MCF 10A (cell line): ENCODE measurements at regions of chr2 and their contacts with region 1.

Region 1: GRCh38 chr2:69755862-69756467 is 14.0 kb downstream of the ANXA4 start:
- DNase-seq: peak; percentile 94
- H3K4me3 Mint-ChIP-seq: peak overlapping the region; percentile 17
- H3K27ac Mint-ChIP-seq: peak overlapping the region; percentile 41
- H3K4me1 Mint-ChIP-seq: peaks cover 28% of the 10 kb centered on the region
- H3K27me3 Mint-ChIP-seq: no peaks in the 10 kb centered on the region
- CTCF ChIP-seq: no peak

Region 2: DNA sequence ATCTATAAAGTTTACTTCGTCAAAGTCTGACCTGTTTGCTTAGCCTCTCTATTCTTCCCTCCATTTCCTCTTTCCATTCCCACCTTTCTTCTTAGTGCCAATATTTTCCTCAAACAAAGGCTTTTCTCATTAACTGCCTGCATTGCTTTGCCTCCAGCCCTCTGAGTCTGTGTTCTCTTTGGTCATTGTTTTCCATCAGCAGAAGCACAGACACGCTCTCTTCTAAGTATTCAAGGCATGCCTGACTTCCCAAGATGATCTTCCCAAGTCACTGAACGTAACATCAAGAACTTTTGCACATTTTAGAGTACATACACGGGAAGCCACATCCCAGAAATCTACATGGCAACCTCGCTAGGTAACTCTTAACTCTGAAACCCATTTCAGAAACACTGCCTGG is 46.7 kb before region 1 on chr2:
- CTCF ChIA-PET with region 1: no interaction called
- POLR2A ChIA-PET with region 1: no interaction called
- intact Hi-C with region 1: no loop called
- DNase-seq: no peak
- H3K4me3 Mint-ChIP-seq: no peak overlapping the region
- H3K27ac Mint-ChIP-seq: no peak overlapping the region
- H3K4me1 Mint-ChIP-seq: no peaks in the 10 kb centered on the region
- H3K27me3 Mint-ChIP-seq: no peaks in the 10 kb centered on the region
- CTCF ChIP-seq: no peak

Region 3: DNA sequence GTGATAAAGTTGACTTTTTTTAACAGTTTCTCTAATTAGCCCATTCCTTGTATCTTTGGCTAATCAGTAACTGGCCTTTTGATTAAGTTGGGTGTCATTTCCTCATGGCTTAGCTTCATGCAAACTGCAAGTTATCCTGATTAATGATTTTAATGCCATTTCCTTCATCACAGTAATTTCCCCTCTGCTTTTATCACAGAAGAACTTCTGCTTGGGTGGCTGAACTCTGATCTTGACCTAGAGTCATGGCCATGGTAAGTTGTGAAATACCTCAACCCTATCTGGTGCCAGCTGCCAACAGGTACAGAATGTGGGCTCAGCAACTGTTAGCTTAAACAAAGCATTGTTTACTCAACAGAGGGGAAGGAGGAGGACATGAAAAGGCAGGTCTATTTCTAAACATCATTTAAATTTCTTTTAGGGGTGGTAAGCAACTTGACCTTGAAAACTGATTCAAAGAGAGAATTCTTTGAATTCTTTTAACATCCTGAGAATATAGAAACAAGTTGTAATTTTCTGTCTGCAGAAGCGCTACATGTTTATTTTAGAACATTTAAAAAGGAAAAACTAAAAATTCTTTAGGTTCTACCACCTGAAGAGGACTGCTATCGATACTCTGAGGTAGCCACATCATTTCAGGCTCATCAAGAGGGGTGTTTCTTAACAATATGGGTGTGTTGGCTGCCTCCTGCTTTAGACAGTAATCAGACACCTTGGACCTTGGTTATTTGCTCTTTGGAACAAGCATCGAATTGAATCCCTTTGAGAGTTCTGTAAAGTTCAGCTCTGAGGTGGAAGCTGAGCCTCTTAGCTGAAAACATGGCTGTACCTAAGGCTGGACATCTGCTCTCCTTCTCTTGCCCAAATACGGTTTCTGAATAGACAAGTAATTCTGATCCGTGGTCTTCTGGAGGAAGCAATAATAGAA is 25.6 kb after region 1 on chr2:
- CTCF ChIA-PET with region 1: no interaction called
- POLR2A ChIA-PET with region 1: interaction called, 11 read pairs
- intact Hi-C with region 1: no loop called
- DNase-seq: peak; percentile 57
- H3K4me3 Mint-ChIP-seq: no peak overlapping the region
- H3K27ac Mint-ChIP-seq: peak overlapping the region; percentile 10
- H3K4me1 Mint-ChIP-seq: peaks cover 27% of the 10 kb centered on the region
- H3K27me3 Mint-ChIP-seq: no peaks in the 10 kb centered on the region
- CTCF ChIP-seq: no peak

Region 4: GRCh38 chr2:70280242-70280798 is 524.4 kb after region 1 on chr2:
- CTCF ChIA-PET with region 1: no interaction called
- POLR2A ChIA-PET with region 1: no interaction called
- intact Hi-C with region 1: no loop called
- DNase-seq: no peak
- H3K4me3 Mint-ChIP-seq: no peak overlapping the region
- H3K27ac Mint-ChIP-seq: no peak overlapping the region
- H3K4me1 Mint-ChIP-seq: peaks cover 7% of the 10 kb centered on the region
- H3K27me3 Mint-ChIP-seq: no peaks in the 10 kb centered on the region
- CTCF ChIP-seq: no peak